Activated naive CD4-positive, alpha-beta T cell treated with anti-CD3 and anti-CD28 coated beads, Interleukin-2, amount 10 ng/mL, durations not matched to agents 7 days and 5 days (primary cell): ENCODE measurements at regions of chr1 and their contacts with region 1.

Region 1: DNA sequence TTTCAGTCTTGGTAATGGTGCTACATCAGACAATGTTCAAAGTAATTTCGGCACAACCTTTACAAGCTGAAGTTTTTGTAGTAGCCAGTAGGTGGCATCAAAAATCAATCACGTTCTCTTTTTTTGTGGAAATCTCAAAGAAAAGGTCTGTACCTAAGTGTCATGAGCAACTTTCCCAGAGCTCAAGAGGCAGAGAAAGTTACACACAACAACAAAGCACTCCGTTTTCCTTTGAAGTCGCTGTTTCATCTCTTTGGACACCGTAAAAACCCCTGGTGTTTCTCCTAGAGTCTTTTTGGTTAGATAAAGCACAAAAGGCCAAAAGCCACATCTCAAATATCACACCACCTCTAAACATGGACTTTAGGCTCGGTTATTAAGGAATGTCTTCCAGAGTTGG is 131.6 kb downstream of the LHX8 start:
- DNase-seq: no peak
- H3K4me3 Mint-ChIP-seq: no peak overlapping the region
- H3K27ac Mint-ChIP-seq: no peak overlapping the region
- H3K4me1 Mint-ChIP-seq: no peaks in the 10 kb centered on the region
- H3K27me3 Mint-ChIP-seq: no peaks in the 10 kb centered on the region

Region 2: GRCh38 chr1:75632350-75632949 is 366.7 kb after region 1 on chr1:
- CTCF ChIA-PET with region 1: interaction called, 11 read pairs
- DNase-seq: no peak
- H3K4me3 Mint-ChIP-seq: no peak overlapping the region
- H3K27ac Mint-ChIP-seq: no peak overlapping the region
- H3K4me1 Mint-ChIP-seq: no peaks in the 10 kb centered on the region
- H3K27me3 Mint-ChIP-seq: peaks cover 4% of the 10 kb centered on the region